Mammary epithelial cell (primary cell): ENCODE measurements at regions of chr15 and their contacts with region 1.

Region 1: GRCh38 chr15:80695104-80695910 is at the start of gene ABHD17C:
- DNase-seq: peak; percentile 70
- H3K4me3 ChIP-seq: peak within 1 kb of the TSS; percentile 89 to 95 (median 95)
- H3K27ac ChIP-seq: peak within 1 kb of the TSS; percentile 79
- H3K4me1 ChIP-seq: peaks cover 19% of the 10 kb centered on the region
- H3K27me3 ChIP-seq: no peaks in the 10 kb centered on the region
- CTCF ChIP-seq: no peak
- total RNA-seq, gene ABHD17C: 5.2 to 23.2 TPM

Region 2: DNA sequence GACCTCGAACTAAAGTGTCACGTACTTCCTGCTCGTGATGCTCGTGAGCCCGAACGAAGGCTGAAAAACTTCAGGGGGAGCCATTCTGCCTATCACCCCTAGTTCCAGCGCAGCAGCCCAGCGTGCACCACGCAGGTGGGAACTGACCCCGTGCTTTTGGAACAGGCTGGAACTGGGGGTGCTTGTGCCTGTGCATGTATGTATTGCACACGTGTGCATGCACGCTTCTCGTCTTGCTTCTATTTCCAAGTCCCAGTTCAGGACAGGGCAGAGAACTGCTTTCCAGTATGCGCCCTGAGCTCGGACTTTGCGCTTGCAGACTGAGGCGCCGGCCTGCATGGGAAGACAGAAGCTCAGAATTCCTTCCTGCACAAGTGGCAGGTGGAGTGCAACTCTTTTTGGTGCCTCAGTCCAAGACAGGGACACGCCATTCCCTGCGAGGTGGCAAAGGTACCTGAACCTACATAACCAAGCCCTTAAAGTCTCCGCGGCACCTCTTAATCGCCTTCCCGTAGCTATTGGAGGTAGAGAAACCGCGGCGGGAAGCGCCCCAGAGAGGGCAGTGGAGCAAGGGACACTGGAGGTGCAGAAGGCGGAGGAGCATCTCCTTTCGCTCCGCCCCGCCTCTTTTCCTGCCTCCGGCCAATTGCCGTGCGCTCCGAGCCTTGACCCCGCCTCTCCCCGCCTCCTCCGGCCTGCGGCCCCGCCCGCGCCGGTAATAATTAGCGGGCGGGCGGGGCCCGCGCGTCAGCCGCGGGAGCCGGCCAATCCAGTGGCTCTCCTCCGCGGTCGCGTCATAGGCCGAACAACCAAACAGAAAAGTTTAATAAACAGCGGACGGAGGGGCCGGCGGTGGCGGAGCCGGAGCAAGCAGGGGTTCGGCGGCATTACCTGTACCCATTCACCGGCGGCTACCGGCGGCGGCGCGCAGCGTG is 636.2 kb before region 1 on chr15 and contains the start of gene ZFAND6:
- CTCF ChIA-PET with region 1: no interaction called
- dilution Hi-C with region 1: no loop called
- in situ Hi-C with region 1: no loop called
- intact Hi-C with region 1: no loop called
- DNase-seq: peak; percentile 95
- H3K4me3 ChIP-seq: peak within 1 kb of the TSS; percentile 72 to 95 (median 74)
- H3K27ac ChIP-seq: peak within 1 kb of the TSS; percentile 82
- H3K4me1 ChIP-seq: peaks cover 11% of the 10 kb centered on the region
- H3K27me3 ChIP-seq: no peaks in the 10 kb centered on the region
- CTCF ChIP-seq: no peak
- total RNA-seq, gene ZFAND6: 52.7 to 102 TPM

Region 3: GRCh38 chr15:80289528-80290495 is 405.5 kb before region 1 on chr15:
- CTCF ChIA-PET with region 1: no interaction called
- dilution Hi-C with region 1: no loop called
- in situ Hi-C with region 1: no loop called
- intact Hi-C with region 1: no loop called
- DNase-seq: no peak
- H3K4me3 ChIP-seq: no peak overlapping the region
- H3K27ac ChIP-seq: no peak overlapping the region
- H3K4me1 ChIP-seq: no peaks in the 10 kb centered on the region
- H3K27me3 ChIP-seq: no peaks in the 10 kb centered on the region
- CTCF ChIP-seq: no peak

Region 4: GRCh38 chr15:80619680-80620079 is 75.6 kb before region 1 on chr15:
- CTCF ChIA-PET with region 1: interaction called, 3 read pairs
- dilution Hi-C with region 1: no loop called
- in situ Hi-C with region 1: no loop called
- intact Hi-C with region 1: loop called (anchors 1 kb)
- DNase-seq: peak; percentile 24
- H3K4me3 ChIP-seq: no peak overlapping the region
- H3K27ac ChIP-seq: no peak overlapping the region
- H3K4me1 ChIP-seq: peaks cover 12% of the 10 kb centered on the region
- H3K27me3 ChIP-seq: no peaks in the 10 kb centered on the region
- CTCF ChIP-seq: peak in 1 of 2 donors; percentile 41

Region 5: DNA sequence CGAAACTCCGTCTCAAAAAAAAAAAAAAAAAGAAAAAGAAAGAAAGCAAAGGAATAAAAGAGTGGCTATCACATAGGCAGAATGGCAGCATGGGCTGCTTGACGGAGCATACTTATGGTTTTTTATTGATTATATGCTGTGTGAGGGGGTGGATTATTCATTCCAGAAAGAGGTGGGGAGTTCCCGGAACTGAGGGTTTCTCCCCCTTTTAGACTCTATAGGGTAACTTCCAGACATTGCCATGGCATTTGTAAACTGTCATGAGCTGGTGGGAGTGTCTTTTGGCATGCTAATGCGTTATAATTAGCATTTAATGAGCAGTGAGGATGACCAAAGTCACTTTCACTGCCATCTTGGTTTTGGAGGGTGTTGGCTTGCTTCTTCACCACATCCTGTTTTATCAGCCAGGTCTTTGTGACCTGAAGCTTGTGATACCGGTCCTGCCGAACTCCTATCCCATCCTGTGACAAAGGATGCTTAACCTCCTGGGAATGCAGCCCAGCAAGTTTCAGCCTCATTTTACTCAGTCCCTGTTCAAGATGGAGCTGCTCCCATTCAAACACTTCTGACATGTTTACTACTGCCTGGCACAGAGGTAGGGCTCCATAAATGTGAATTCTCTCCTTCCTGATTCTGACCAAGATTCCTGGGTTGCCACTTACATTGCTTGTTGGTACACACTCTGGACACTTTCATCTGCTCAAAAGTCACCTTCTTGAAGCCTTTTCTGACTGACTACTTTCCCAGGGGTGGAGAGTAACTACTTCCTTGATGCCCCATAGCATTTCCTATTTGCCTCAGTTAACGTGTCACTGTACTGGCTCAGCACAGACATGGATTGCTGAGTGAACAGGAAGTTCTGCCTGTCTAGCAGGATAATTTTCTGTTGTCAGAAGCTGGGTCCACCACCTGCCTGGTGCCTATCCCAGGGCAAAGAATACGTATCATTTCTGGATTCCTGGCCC is 15.9 kb before region 1 on chr15:
- CTCF ChIA-PET with region 1: interaction called, 5 read pairs
- dilution Hi-C with region 1: no loop called
- in situ Hi-C with region 1: no loop called
- intact Hi-C with region 1: loop called (anchors 2 kb)
- DNase-seq: peak; percentile 85
- H3K4me3 ChIP-seq: no peak overlapping the region
- H3K27ac ChIP-seq: peak overlapping the region; percentile 63
- H3K4me1 ChIP-seq: peaks cover 15% of the 10 kb centered on the region
- H3K27me3 ChIP-seq: no peaks in the 10 kb centered on the region
- CTCF ChIP-seq: no peak

Region 6: DNA sequence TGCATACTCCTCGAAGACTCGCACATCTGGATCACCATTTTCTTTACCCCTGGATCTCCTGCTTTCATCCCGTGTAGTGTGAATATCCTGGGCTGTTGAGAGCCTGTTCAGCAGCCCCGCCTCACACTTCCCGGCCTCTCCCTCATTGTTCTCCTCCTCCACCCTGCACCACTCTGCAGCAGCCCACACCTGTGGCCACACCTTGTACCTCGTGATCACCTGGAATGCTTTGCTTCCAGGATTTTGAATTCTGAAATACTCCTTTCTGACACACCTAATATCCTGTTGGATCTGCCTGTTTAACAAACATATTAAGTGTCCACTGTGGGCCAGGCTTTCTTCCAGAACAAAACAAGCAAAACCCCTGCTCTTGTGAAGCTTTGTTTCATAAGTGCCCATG is 14.3 kb after region 1 on chr15:
- CTCF ChIA-PET with region 1: no interaction called
- dilution Hi-C with region 1: no loop called
- in situ Hi-C with region 1: no loop called
- intact Hi-C with region 1: loop called (anchors 1 kb)
- DNase-seq: peak; percentile 75
- H3K4me3 ChIP-seq: no peak overlapping the region
- H3K27ac ChIP-seq: peak overlapping the region; percentile 68
- H3K4me1 ChIP-seq: peaks cover 24% of the 10 kb centered on the region
- H3K27me3 ChIP-seq: no peaks in the 10 kb centered on the region
- CTCF ChIP-seq: no peak

Region 7: DNA sequence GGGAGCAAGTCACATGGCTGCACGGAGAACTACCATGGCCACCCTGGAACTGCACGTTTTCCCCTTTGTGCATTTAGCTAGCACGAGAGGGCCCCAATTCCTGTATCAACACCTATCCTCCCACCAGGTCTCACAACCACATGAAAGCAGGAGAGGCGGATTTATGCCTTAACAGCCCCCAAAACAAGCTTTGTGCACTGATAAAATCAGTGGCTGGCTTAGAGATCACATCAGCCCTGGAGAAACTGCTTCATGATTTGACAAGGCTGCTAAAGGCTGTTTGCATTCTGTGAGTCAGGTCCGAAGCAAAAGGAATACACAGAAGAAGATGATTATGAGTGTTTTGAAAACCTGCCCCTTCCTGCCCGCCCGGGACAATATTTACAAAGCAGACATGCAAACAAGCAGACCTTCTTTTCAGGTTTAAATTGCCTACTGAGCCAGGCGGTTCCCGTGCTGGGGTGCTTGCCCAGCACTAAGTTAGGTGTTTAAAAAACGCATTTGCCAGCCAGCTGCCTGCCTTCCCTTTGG is 109.7 kb after region 1 on chr15:
- CTCF ChIA-PET with region 1: no interaction called
- dilution Hi-C with region 1: no loop called
- in situ Hi-C with region 1: no loop called
- intact Hi-C with region 1: no loop called
- DNase-seq: no peak
- H3K4me3 ChIP-seq: no peak overlapping the region
- H3K27ac ChIP-seq: no peak overlapping the region
- H3K4me1 ChIP-seq: no peaks in the 10 kb centered on the region
- H3K27me3 ChIP-seq: no peaks in the 10 kb centered on the region
- CTCF ChIP-seq: no peak